ENCODE measurements at regions of chr20 and their contacts with region 1.

Region 1: DNA sequence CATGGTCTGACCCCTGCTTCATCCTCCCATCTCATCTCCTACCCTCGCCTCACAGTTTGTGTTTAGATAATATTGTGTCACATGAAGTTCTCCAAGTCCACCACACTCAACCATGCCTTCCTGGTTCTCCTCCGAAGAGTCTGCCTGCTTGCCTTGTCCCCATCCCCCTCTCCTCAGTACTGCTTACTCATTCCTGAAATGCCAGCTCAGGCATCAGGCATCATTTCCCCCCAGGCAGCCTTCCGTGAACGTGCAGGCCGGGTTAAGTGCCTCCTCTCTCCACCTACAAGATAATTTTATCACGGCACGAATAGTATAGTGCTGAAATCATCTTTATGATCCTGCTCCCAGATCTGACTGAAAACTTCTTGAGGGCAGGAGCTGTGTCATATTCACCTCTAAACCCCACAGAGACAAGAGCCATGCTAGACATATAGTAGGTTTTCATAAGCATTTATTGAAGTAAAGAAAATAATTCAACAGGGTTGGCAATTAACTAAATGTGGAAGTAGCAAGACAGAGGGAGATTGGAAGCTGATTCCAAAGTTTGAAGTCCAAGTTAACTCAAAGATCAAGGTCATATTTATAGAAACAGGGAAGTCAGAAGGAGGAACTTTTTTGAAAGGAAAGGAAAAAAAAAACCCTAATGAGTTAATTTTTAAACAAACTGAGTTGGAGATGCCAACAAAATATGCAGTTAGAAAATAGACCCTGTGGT is 48.7 kb upstream of the BMP2 start:
- DNase-seq: no peak
- H3K4me3 ChIP-seq: no peak overlapping the region
- H3K27ac ChIP-seq: no peak overlapping the region
- H3K4me1 ChIP-seq: peaks cover 0 to 13% (median 5%) of the 10 kb centered on the region in 4 donors
- H3K27me3 ChIP-seq: no peaks in the 10 kb centered on the region
- CTCF ChIP-seq: no peak
- EP300 ChIP-seq: no peak
- POLR2A ChIP-seq: no peak

Region 2: GRCh38 chr20:6735942-6736845 is 17.4 kb after region 1 on chr20:
- in situ Hi-C with region 1: no loop called
- intact Hi-C with region 1: loop called (anchors 1 kb)
- DNase-seq: no peak
- H3K4me3 ChIP-seq: no peak overlapping the region
- H3K27ac ChIP-seq: peak overlapping the region in 1 of 4 donors; percentile 25
- H3K4me1 ChIP-seq: peaks cover 0 to 8% (median 0%) of the 10 kb centered on the region in 4 donors
- H3K27me3 ChIP-seq: no peaks in the 10 kb centered on the region
- CTCF ChIP-seq: no peak
- EP300 ChIP-seq: no peak
- POLR2A ChIP-seq: no peak

Measured in transverse colon (tissue), 4 donors.